K562 (cell line): ENCODE measurements at regions of chr14 and their contacts with region 1.

Region 1: GRCh38 chr14:69574263-69574953 is at the start of gene CCDC177:
- DNase-seq: peak; percentile 57 to 60 (median 58)
- ATAC-seq: peak; percentile 90
- H3K4me3 ChIP-seq: no peak within 1 kb of the TSS
- H3K27ac ChIP-seq: no peak within 1 kb of the TSS
- H3K4me1 ChIP-seq: peaks cover 0 to 17% of the 10 kb centered on the region in 2 experiments; a peak in 2 of 5 replicates
- H3K27me3 ChIP-seq: peaks cover 0 to 30% of the 10 kb centered on the region in 2 experiments; a peak in 3 of 5 replicates
- CTCF ChIP-seq: peak; percentile 74 to 81 (median 77)
- EP300 ChIP-seq: no peak
- POLR2A ChIP-seq: no peak
- RAD21 ChIP-seq: peak; percentile 33 to 64; a peak in 3 of 4 replicates
- polyA plus RNA-seq, gene CCDC177: not detected

Region 2: GRCh38 chr14:69242311-69243224 is 331.8 kb before region 1 on chr14:
- CTCF ChIA-PET with region 1: interaction called, 3 read pairs
- POLR2A ChIA-PET with region 1: no interaction called
- in situ Hi-C with region 1: no loop called
- intact Hi-C with region 1: loop called (anchors 10 kb)
- DNase-seq: peak; percentile 51 to 59 (median 56)
- ATAC-seq: peak; percentile 82
- H3K4me3 ChIP-seq: no peak overlapping the region
- H3K27ac ChIP-seq: no peak overlapping the region
- H3K4me1 ChIP-seq: peaks cover 1 to 3% of the 10 kb centered on the region in 2 experiments; a peak in 1 of 5 replicates
- H3K27me3 ChIP-seq: peaks cover 0 to 2% of the 10 kb centered on the region in 2 experiments; a peak in 1 of 5 replicates
- CTCF ChIP-seq: peak; percentile 48 to 69 (median 68); a peak in 5 of 6 replicates
- EP300 ChIP-seq: no peak
- POLR2A ChIP-seq: no peak
- RAD21 ChIP-seq: peak; percentile 41 to 63; a peak in 3 of 4 replicates

Region 3: DNA sequence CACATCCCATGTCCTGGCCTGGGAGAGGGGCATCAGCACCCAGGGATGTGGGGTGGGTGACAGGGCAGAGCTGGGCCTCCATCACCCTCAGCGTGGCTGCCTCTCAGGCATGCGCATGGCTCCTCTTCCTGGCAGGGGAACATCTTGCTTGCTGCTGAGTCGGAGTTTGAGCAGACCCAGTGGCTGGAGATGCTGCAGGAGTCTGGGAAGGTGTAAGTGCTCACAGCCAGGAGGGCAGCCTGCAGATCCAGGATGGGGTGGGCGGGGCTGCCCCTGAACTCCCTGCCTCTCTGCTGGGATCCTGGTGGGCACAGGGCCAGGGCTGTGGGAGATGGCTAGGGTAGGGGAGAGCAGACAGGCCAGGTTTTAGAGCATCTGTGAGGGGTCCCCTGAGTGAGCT is 73.7 kb before region 1 on chr14:
- CTCF ChIA-PET with region 1: no interaction called
- POLR2A ChIA-PET with region 1: no interaction called
- in situ Hi-C with region 1: no loop called
- intact Hi-C with region 1: no loop called
- DNase-seq: no peak
- ATAC-seq: no peak
- H3K4me3 ChIP-seq: no peak overlapping the region
- H3K27ac ChIP-seq: no peak overlapping the region
- H3K4me1 ChIP-seq: no peaks in the 10 kb centered on the region
- H3K27me3 ChIP-seq: peaks cover 0 to 22% of the 10 kb centered on the region in 2 experiments; a peak in 2 of 5 replicates
- CTCF ChIP-seq: no peak
- EP300 ChIP-seq: no peak
- POLR2A ChIP-seq: no peak
- RAD21 ChIP-seq: no peak

Region 4: GRCh38 chr14:69547701-69548348 is 26.6 kb before region 1 on chr14:
- CTCF ChIA-PET with region 1: no interaction called
- POLR2A ChIA-PET with region 1: no interaction called
- in situ Hi-C with region 1: no loop called
- intact Hi-C with region 1: loop called (anchors 1 kb)
- DNase-seq: peak; percentile 28 to 72 (median 61)
- ATAC-seq: peak; percentile 90
- H3K4me3 ChIP-seq: no peak overlapping the region
- H3K27ac ChIP-seq: no peak overlapping the region
- H3K4me1 ChIP-seq: peaks cover 0 to 7% of the 10 kb centered on the region in 2 experiments; a peak in 1 of 5 replicates
- H3K27me3 ChIP-seq: peaks cover 0 to 17% of the 10 kb centered on the region in 2 experiments; a peak in 4 of 5 replicates
- CTCF ChIP-seq: peak; percentile 52 to 62 (median 62); a peak in 5 of 6 replicates
- EP300 ChIP-seq: no peak
- POLR2A ChIP-seq: no peak
- RAD21 ChIP-seq: peak in 1 of 2 experiments; percentile 36; a peak in 2 of 4 replicates

Region 5: GRCh38 chr14:70027785-70028428 is 453.5 kb after region 1 on chr14:
- CTCF ChIA-PET with region 1: no interaction called
- POLR2A ChIA-PET with region 1: no interaction called
- in situ Hi-C with region 1: loop called (anchors 25 kb)
- intact Hi-C with region 1: no loop called
- DNase-seq: peak; percentile 60 to 80 (median 76)
- ATAC-seq: peak; percentile 92
- H3K4me3 ChIP-seq: no peak overlapping the region
- H3K27ac ChIP-seq: no peak overlapping the region
- H3K4me1 ChIP-seq: no peaks in the 10 kb centered on the region
- H3K27me3 ChIP-seq: peaks cover 0 to 13% of the 10 kb centered on the region in 2 experiments; a peak in 1 of 5 replicates
- CTCF ChIP-seq: peak; percentile 75 to 80 (median 77)
- EP300 ChIP-seq: no peak
- POLR2A ChIP-seq: no peak
- RAD21 ChIP-seq: peak; percentile 68 to 82